T-cell (primary cell): ENCODE measurements at regions of chr3 and their contacts with region 1.

Region 1: GRCh38 chr3:51434746-51435327 is 43.8 kb downstream of the RBM15B start:
- DNase-seq: peak in 32 of 35 experiments; percentile 6 to 75 (median 30)
- ATAC-seq: peak; percentile 75 to 96 (median 90)
- H3K4me3 ChIP-seq: no peak overlapping the region
- H3K4me3 Mint-ChIP-seq: no peak overlapping the region
- H3K27ac ChIP-seq: no peak overlapping the region
- H3K27ac Mint-ChIP-seq: peak overlapping the region in 1 of 2 donors; percentile 53
- H3K4me1 ChIP-seq: no peaks in the 10 kb centered on the region
- H3K4me1 Mint-ChIP-seq: peaks cover 7 to 9% (median 7%) of the 10 kb centered on the region in 3 donors
- H3K27me3 ChIP-seq: no peaks in the 10 kb centered on the region
- H3K27me3 Mint-ChIP-seq: no peaks in the 10 kb centered on the region

Region 2: GRCh38 chr3:49667701-49668413 is 1767.0 kb before region 1 on chr3:
- CTCF ChIA-PET with region 1: interaction called in 1 of 2 experiments, 11 read pairs
- POLR2A ChIA-PET with region 1: no interaction called
- DNase-seq: no peak
- ATAC-seq: no peak
- H3K4me3 ChIP-seq: no peak overlapping the region
- H3K4me3 Mint-ChIP-seq: no peak overlapping the region
- H3K27ac ChIP-seq: no peak overlapping the region
- H3K27ac Mint-ChIP-seq: no peak overlapping the region
- H3K4me1 ChIP-seq: no peaks in the 10 kb centered on the region
- H3K4me1 Mint-ChIP-seq: peaks cover 5 to 13% (median 7%) of the 10 kb centered on the region in 3 donors
- H3K27me3 ChIP-seq: peaks cover 0 to 28% of the 10 kb centered on the region in 2 experiments
- H3K27me3 Mint-ChIP-seq: peaks cover 0 to 2% of the 10 kb centered on the region in 2 donors

Region 3: GRCh38 chr3:50503504-50504342 is 931.1 kb before region 1 on chr3 and contains the start of gene CACNA2D2:
- CTCF ChIA-PET with region 1: no interaction called
- POLR2A ChIA-PET with region 1: no interaction called
- DNase-seq: peak; percentile 45 to 82 (median 67)
- ATAC-seq: peak; percentile 86 to 91 (median 90)
- H3K4me3 ChIP-seq: peak within 1 kb of the TSS; percentile 52 to 58
- H3K4me3 Mint-ChIP-seq: peak within 1 kb of the TSS; percentile 69 to 77 (median 74)
- H3K27ac ChIP-seq: no peak within 1 kb of the TSS
- H3K27ac Mint-ChIP-seq: no peak within 1 kb of the TSS
- H3K4me1 ChIP-seq: peaks cover 0 to 18% of the 10 kb centered on the region in 2 experiments
- H3K4me1 Mint-ChIP-seq: peaks cover 8 to 10% (median 10%) of the 10 kb centered on the region in 3 donors
- H3K27me3 ChIP-seq: peaks cover 0 to 55% of the 10 kb centered on the region in 2 experiments
- H3K27me3 Mint-ChIP-seq: peaks cover 10 to 41% of the 10 kb centered on the region in 2 donors
- total RNA-seq, gene CACNA2D2: 2.6 to 8.9 (median 4.1) TPM

Region 4: DNA sequence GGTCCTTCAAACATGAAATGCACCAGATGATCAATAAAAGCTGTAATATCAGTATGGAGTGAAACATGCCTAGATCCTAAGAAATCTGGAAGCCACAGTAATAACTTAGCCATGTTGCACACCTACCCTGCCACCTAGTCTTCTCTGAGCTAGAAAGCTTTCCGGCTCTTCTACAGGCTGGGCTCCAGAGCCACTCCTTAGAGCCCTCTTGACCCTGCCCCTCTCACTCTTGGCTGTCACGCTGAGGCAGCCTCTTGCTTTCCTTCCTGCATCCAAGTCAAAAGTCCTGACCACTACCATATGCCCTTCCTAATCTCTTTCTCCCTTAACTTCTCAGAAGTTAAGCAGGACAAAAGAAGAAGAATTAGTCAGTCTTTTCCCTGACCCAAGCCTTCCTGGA is 26.0 kb before region 1 on chr3:
- CTCF ChIA-PET with region 1: interaction called in 1 of 2 experiments, 3 read pairs
- POLR2A ChIA-PET with region 1: interaction called in 1 of 2 experiments, 12 read pairs
- DNase-seq: no peak
- ATAC-seq: no peak
- H3K4me3 ChIP-seq: no peak overlapping the region
- H3K4me3 Mint-ChIP-seq: no peak overlapping the region
- H3K27ac ChIP-seq: no peak overlapping the region
- H3K27ac Mint-ChIP-seq: no peak overlapping the region
- H3K4me1 ChIP-seq: peaks cover 0 to under 1% of the 10 kb centered on the region in 2 experiments
- H3K4me1 Mint-ChIP-seq: peaks cover 18 to 22% (median 19%) of the 10 kb centered on the region in 3 donors
- H3K27me3 ChIP-seq: no peaks in the 10 kb centered on the region
- H3K27me3 Mint-ChIP-seq: no peaks in the 10 kb centered on the region

Region 5: DNA sequence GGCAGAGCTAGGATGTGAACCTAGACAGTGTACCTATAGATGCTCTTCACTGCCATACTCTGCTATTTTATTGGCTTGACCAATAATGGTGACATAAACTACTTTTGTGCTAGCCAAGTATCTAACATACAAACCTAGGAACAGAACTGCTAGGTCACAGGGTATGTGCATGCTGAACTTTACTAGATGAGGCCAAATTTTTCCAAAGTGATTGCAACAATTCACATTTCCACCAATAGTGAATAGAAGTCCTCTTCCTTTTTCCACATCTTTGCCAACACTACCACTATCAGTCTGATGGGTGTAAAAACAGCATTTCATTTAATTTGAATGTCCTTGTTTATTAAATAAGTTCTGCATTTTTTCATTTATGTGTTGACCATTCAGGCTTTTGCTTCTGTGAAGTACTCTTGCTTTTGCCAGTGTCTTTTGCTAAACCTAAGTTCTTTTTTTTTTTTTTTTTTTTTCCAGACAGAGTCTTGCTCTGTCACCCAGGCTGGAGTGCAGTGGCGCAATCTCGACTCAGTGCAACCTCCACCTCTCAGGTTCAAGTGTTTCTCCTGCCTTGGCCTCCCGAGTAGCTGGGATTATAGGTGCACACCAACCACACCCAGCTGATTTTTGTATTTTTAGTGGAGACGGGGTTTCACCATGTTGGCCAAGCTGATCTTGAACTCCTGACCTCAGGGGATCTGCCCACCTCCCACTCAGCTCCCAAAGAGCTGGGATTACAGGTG is 10.9 kb after region 1 on chr3:
- CTCF ChIA-PET with region 1: interaction called, 3 to 15 read pairs
- POLR2A ChIA-PET with region 1: no interaction called
- DNase-seq: no peak
- ATAC-seq: no peak
- H3K4me3 ChIP-seq: no peak overlapping the region
- H3K4me3 Mint-ChIP-seq: no peak overlapping the region
- H3K27ac ChIP-seq: no peak overlapping the region
- H3K27ac Mint-ChIP-seq: no peak overlapping the region
- H3K4me1 ChIP-seq: peaks cover 0 to 9% of the 10 kb centered on the region in 2 experiments
- H3K4me1 Mint-ChIP-seq: peaks cover 34 to 49% (median 41%) of the 10 kb centered on the region in 3 donors
- H3K27me3 ChIP-seq: no peaks in the 10 kb centered on the region
- H3K27me3 Mint-ChIP-seq: no peaks in the 10 kb centered on the region